ENCODE measurements at regions of chr1 and their contacts with region 1.

Region 1: GRCh38 chr1:159798893-159799292 is 3.3 kb upstream of the FCRL6 start:
- DNase-seq: peak; percentile 95
- H3K4me3 Mint-ChIP-seq: no peak overlapping the region
- H3K27ac Mint-ChIP-seq: no peak overlapping the region
- H3K4me1 Mint-ChIP-seq: no peaks in the 10 kb centered on the region
- H3K27me3 Mint-ChIP-seq: no peaks in the 10 kb centered on the region
- CTCF ChIP-seq: peak; percentile 83

Region 2: GRCh38 chr1:159132271-159132881 is 666.5 kb before region 1 on chr1:
- CTCF ChIA-PET with region 1: interaction called, 46 read pairs
- POLR2A ChIA-PET with region 1: no interaction called
- intact Hi-C with region 1: loop called (anchors 1 kb)
- DNase-seq: peak; percentile 92
- H3K4me3 Mint-ChIP-seq: no peak overlapping the region
- H3K27ac Mint-ChIP-seq: no peak overlapping the region
- H3K4me1 Mint-ChIP-seq: no peaks in the 10 kb centered on the region
- H3K27me3 Mint-ChIP-seq: no peaks in the 10 kb centered on the region
- CTCF ChIP-seq: peak; percentile 95

Region 3: GRCh38 chr1:159780583-159781582 is 18.0 kb before region 1 on chr1 and contains the start of gene DUSP23:
- CTCF ChIA-PET with region 1: interaction called, 76 read pairs
- POLR2A ChIA-PET with region 1: interaction called, 14 read pairs
- intact Hi-C with region 1: loop called (anchors 1 kb)
- DNase-seq: peak; percentile 100
- H3K4me3 Mint-ChIP-seq: peak within 1 kb of the TSS; percentile 87
- H3K27ac Mint-ChIP-seq: peak within 1 kb of the TSS; percentile 71
- H3K4me1 Mint-ChIP-seq: peaks cover 65% of the 10 kb centered on the region
- H3K27me3 Mint-ChIP-seq: no peaks in the 10 kb centered on the region
- CTCF ChIP-seq: peak; percentile 97
- total RNA-seq, gene DUSP23: 119 and 178 TPM in 2 replicates

Region 4: DNA sequence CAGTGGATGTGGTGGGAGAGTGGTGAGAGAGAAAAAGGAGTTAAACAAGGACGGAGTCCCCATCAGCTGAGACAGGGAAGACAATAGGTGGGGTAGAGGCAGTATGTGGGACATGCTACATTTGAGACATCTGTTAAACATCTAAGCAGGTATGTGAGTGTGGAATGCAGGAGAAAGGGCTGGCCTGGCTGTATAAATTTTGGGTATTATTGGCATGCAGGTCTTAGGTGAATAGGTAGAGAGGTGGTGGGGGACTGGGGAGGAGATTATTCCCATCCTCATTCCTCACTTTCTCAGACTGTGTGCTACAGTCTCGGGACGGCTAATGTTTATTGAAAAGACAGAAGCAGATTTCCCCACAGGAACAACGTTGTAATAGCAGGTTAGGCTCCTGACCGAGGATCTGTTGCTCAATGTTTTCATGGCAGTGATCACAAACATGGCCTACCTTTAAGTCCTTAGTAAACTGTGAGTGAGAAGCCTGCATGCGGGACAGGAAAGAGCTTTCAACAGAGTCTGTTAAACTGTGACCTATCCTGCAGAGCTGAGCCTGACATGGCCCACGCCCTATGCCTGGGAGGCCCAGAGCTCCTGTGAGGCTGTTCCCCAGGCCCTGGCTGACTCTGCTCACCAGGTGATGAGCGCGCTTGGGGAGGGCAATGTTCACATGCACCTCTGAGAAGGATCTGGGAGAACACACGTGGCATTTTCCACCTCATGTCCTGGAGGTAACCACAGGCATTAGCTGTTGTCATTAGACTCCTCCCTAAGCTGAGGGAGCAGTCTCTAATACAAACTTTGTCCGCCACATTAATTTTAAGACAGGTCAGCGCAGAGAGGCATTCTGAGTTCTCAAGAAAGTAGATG is 47.1 kb after region 1 on chr1:
- CTCF ChIA-PET with region 1: interaction called, 57 read pairs
- POLR2A ChIA-PET with region 1: no interaction called
- intact Hi-C with region 1: no loop called
- DNase-seq: peak; percentile 16
- H3K4me3 Mint-ChIP-seq: no peak overlapping the region
- H3K27ac Mint-ChIP-seq: peak overlapping the region; percentile 44
- H3K4me1 Mint-ChIP-seq: peaks cover 34% of the 10 kb centered on the region
- H3K27me3 Mint-ChIP-seq: no peaks in the 10 kb centered on the region
- CTCF ChIP-seq: no peak

Region 5: DNA sequence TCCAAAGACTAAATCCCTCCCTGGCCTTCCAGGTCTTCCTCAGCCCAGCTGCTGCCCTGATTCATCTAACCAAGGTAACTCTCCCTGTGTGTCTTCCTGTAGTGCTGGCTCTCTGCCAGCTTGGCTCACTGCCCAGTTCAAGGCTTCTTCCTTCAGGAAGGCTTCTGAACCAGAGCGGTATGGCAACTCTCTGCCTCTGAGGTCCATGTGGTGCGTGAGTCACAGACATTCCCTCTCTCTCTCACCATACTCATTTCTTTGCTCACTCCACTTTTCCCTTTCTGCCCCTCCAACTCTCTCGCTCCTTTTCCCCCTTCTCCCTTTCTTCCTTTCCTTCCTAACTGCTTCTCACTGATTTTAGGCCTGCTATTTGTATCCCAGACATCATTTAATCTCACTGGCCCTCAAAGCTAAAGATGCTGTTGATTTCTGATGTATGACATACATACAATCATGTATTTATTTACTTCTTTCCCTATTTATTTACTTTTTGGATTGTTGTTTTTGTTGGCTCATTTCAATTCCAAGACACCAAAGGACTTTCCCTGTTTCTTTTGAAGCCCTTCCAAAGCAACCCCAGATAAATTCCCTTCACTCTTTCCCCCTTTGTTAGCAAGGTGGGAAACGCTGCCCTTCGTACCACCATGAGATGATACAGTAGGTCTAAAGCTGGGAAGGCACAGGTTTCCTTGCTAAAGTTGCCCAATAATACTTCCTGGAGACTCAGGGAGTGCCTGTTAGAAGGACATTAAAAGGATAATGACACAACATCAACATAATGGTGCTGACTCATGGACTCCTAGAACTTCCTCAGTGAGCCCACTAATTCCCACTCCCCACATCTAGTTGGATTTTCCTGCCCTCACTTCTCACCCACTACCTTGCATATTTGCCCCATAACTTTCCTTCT is 83.3 kb after region 1 on chr1:
- CTCF ChIA-PET with region 1: interaction called, 1,396 read pairs
- POLR2A ChIA-PET with region 1: interaction called, 10 read pairs
- intact Hi-C with region 1: no loop called
- DNase-seq: peak; percentile 100
- H3K4me3 Mint-ChIP-seq: no peak overlapping the region
- H3K27ac Mint-ChIP-seq: no peak overlapping the region
- H3K4me1 Mint-ChIP-seq: peaks cover 14% of the 10 kb centered on the region
- H3K27me3 Mint-ChIP-seq: no peaks in the 10 kb centered on the region
- CTCF ChIP-seq: no peak

Region 6: DNA sequence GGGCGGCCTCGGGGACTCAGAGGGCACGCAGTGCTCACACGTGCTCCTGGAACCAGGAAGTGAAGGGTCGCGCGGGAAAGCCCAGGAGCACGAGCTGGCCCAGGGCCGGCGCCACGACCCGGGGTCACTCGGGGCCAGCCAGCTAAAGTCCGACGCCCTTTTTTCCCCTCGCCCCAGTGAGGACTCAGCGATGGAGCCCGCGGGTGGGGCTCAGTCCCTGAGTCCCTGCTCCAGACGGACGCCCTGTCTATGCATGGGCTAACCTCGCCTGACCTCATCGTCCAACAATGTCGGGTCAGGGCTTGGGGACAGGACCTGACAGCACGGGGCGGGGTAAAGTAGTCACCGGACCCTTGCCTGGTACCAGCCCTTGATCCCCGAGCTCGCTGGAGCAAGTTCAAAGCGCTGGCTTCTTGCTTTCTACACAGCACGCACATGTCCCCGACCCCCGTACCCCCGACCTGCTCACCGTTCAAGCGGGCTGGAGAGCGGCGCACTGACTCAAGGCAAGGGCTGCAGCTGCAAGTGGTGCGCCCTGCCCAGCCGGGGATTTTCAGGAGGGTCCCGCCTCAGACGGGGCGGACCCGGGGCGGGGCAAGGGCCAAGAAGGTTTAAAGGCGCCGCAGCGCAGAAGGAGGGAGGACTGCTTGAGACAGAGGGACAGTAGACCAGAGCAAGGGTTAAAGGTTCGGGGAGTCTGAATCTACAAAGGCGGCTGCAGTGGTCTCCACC is 126.3 kb after region 1 on chr1 and contains the start of gene TAGLN2:
- CTCF ChIA-PET with region 1: interaction called, 15 read pairs
- POLR2A ChIA-PET with region 1: no interaction called
- intact Hi-C with region 1: no loop called
- DNase-seq: peak; percentile 97
- H3K4me3 Mint-ChIP-seq: peak within 1 kb of the TSS; percentile 81
- H3K27ac Mint-ChIP-seq: peak within 1 kb of the TSS; percentile 99
- H3K4me1 Mint-ChIP-seq: peaks cover 44% of the 10 kb centered on the region
- H3K27me3 Mint-ChIP-seq: no peaks in the 10 kb centered on the region
- CTCF ChIP-seq: no peak
- total RNA-seq, gene TAGLN2: 464 and 483 TPM in 2 replicates

Measured in MCF 10A (cell line).